ENCODE measurements at regions of chr9 and their contacts with region 1.

Region 1: GRCh38 chr9:113578882-113579282 is 115.4 kb downstream of the RGS3 start:
- DNase-seq: peak; percentile 90
- H3K4me3 ChIP-seq: peak overlapping the region; percentile 52
- H3K27ac ChIP-seq: peak overlapping the region; percentile 96
- H3K4me1 ChIP-seq: peaks cover 92% of the 10 kb centered on the region
- CTCF ChIP-seq: no peak

Region 2: DNA sequence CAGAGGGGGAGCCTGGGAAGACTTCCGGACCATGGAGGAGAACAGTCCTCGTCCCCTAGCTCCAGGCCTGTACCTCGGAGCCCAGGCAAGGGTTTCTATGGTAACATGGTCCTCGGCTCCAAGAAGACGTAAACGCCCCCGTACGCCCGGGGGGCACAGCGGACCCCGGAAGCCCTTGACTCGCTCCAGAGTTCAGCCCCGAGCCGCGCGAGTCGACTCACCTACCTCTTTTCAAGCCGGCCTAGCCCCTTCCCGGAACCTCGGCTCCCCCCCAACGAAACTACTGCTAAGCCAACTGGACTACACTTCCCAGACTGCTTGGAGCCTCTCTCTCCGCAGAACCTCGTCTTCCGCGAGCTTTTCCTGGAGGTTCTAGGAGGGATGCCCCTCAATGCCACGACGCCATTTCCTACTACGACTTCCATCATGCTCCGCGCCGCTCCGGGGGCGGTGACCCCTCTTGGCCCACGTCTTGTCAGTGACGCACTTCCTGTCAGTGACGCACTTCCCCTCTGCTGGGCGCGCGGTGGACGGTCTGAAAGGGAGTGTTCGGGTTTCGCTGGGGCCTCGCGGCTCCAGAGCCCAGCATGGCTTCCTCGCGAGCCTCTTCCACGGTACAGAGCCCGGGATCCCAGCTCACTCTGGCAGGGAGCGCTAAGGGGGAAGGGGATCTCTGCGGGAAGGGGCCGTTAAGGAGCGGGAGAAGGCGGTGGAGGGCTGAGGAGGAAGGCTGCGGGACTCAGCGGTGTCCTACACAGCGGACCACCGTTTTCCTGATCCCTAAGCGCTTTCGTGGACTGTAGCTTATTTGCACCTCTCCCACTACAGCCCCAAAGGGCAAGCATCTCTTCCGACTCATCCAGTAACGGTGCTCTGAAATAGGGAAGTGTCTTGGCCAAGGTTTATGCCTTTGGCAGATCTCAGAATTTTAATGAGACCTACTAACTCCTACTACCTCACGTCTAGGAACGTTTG is 303.4 kb before region 1 on chr9 and contains the starts of genes CDC26 and PRPF4:
- CTCF ChIA-PET with region 1: no interaction called
- POLR2A ChIA-PET with region 1: interaction called, 4 read pairs
- intact Hi-C with region 1: loop called (anchors 2 kb)
- DNase-seq: peak; percentile 97
- H3K4me3 ChIP-seq: peak within 1 kb of the TSS; percentile 84
- H3K27ac ChIP-seq: peak within 1 kb of the TSS; percentile 68
- H3K4me1 ChIP-seq: peaks cover 29% of the 10 kb centered on the region
- CTCF ChIP-seq: no peak
- total RNA-seq, gene CDC26: 29.9 and 42.5 TPM in 2 replicates
- total RNA-seq, gene PRPF4: 27.4 and 27.8 TPM in 2 replicates

Region 3: GRCh38 chr9:113340017-113340699 is 238.7 kb before region 1 on chr9 and contains the start of gene WDR31:
- CTCF ChIA-PET with region 1: interaction called, 3 read pairs
- POLR2A ChIA-PET with region 1: interaction called, 3 read pairs
- intact Hi-C with region 1: loop called (anchors 1 kb)
- DNase-seq: peak; percentile 71
- H3K4me3 ChIP-seq: peak within 1 kb of the TSS; percentile 70
- H3K27ac ChIP-seq: no peak within 1 kb of the TSS
- H3K4me1 ChIP-seq: no peaks in the 10 kb centered on the region
- CTCF ChIP-seq: no peak
- total RNA-seq, gene WDR31: 0.19 and 0.54 TPM in 2 replicates

Region 4: DNA sequence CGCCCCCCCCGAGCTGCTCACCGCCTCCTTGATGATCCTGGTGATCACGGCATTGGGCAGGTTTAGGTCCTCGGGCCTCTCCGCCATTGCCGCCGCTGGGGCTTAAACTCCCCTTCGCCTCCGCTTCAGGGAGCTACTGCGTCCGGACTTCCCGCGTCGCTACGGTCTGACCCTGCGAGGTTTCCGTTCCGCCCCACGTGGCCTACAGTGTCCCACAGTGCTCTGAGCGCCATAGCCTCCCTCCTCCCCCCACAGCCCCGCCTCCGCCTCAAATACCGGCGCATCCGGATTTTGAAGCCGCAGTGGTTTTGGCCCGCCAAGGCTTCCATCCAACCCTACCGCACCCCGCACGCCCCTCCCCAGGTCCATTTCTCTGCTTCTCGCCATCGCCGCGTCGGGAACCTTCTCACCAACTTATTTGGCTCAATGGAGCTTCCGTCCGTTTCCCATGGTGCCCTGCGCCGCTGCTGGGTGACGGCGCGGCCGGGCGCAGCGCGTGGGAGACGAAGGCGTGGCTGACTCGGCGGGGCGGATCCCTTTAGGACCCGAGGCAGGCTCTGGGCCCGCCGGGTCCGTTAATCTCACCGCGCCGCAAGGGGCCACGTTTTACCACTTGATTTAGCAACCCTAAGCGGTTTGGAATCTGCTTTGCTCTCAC is 168.5 kb before region 1 on chr9 and contains the starts of genes C9orf43 and POLE3:
- CTCF ChIA-PET with region 1: no interaction called
- POLR2A ChIA-PET with region 1: interaction called, 14 read pairs
- intact Hi-C with region 1: loop called (anchors 1 kb)
- DNase-seq: peak; percentile 97
- H3K4me3 ChIP-seq: peak within 1 kb of the TSS; percentile 88
- H3K27ac ChIP-seq: peak within 1 kb of the TSS; percentile 97
- H3K4me1 ChIP-seq: peaks cover 46% of the 10 kb centered on the region
- CTCF ChIP-seq: no peak
- total RNA-seq, gene C9orf43: 1.8 and 3.0 TPM in 2 replicates
- total RNA-seq, gene POLE3: 108 and 132 TPM in 2 replicates

Region 5: DNA sequence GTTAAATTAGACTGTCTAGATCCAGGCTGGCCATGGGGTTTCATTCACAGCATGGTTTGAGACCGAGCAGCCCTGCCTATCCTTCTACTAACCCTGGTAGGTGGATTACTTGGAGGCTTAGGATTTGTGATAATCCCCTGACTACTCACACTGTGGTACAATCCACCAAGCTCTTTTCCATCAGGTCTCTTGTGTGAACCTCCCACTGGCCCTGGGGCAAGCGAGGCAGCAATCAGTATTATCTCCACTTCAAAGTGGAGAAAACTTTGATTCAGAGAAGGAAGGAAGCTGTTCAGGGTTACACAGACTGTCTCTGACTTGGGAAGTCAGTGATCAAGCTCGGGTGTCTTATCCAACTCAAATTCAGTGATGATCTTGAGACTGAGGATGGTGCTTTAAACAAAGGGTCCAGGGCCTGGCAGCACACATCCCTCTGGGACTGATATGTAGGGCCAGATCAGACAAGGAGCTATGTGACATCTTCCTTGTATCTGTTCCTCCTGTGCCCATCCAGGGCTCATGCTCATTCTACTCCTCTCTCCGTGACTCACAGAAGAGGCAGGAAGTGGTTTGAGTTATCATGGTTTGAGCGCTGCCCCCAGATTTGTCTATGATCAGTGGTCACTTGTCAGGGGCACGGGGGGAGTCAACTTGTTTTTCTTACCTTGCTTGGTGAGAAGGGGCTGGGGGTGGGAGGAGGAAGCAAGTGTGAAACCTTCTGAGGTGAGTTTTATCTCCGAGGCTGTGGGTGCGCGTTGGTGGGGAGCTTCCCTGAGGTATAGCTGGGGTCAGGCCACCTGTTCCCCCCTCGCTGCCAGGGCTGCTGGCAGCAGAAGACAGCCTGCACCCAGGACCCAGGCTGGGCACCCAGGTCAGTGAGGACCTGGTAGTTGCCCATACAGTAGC is 66.8 kb before region 1 on chr9:
- CTCF ChIA-PET with region 1: interaction called, 8 read pairs
- POLR2A ChIA-PET with region 1: interaction called, 44 read pairs
- intact Hi-C with region 1: loop called (anchors 1 kb)
- DNase-seq: peak; percentile 38
- H3K4me3 ChIP-seq: no peak overlapping the region
- H3K27ac ChIP-seq: no peak overlapping the region
- H3K4me1 ChIP-seq: peaks cover 31% of the 10 kb centered on the region
- CTCF ChIP-seq: no peak

Region 6: DNA sequence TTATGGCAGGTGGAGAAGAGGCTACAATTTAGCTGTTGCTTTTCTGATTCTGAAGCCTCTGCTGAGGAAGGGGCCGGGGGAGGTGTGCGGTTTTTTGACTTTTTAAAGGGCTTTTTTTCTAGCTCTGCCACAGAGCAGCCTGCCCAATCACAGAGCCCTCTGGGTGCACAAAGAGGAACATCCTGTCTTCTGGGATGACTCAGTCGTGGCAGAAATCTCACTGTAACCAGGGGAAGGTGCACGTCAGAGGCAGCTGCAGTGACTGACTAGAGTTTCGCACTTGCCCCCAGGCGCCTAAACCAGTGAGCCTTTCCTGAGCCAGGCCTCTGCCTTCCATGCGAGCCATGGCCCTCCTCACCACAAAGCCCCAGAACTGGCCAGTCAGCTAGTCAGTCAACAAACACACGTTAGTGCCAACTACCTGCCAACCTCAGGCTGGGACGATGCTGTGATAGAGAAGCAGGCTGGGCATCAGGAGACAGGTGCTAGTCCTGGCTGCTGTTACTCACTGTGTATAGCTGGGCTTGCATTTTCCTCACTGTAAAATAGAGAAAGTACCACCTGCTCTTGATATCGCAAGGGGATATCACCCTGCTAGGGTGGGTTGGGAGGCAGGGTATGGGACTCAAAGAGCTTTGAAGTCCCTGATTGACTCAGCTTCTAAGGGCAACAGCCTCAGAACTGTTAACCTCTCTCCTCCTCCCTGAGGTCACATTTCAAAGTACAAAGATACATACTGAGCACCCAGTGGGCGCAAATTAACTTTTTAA is 806.7 kb after region 1 on chr9:
- CTCF ChIA-PET with region 1: no interaction called
- POLR2A ChIA-PET with region 1: no interaction called
- intact Hi-C with region 1: loop called (anchors 5 kb)
- DNase-seq: peak; percentile 95
- H3K4me3 ChIP-seq: peak overlapping the region; percentile 76
- H3K27ac ChIP-seq: peak overlapping the region; percentile 97
- H3K4me1 ChIP-seq: peaks cover 70% of the 10 kb centered on the region
- CTCF ChIP-seq: peak; percentile 17; the same call in 1 of the 2 replicates

Measured in OCI-LY7 (cell line).